PC-3 (cell line): ENCODE measurements at regions of chr17 and their contacts with region 1.

Region 1: GRCh38 chr17:28041068-28041843 is 1.2 kb upstream of the NLK start:
- DNase-seq: peak; percentile 96
- ATAC-seq: peak; percentile 94
- H3K4me3 ChIP-seq: peak overlapping the region; percentile 82; the same call in 1 of the 2 replicates
- H3K27ac ChIP-seq: no peak overlapping the region
- H3K4me1 ChIP-seq: peaks cover 39% of the 10 kb centered on the region
- H3K27me3 ChIP-seq: no peaks in the 10 kb centered on the region
- CTCF ChIP-seq: no peak

Region 2: DNA sequence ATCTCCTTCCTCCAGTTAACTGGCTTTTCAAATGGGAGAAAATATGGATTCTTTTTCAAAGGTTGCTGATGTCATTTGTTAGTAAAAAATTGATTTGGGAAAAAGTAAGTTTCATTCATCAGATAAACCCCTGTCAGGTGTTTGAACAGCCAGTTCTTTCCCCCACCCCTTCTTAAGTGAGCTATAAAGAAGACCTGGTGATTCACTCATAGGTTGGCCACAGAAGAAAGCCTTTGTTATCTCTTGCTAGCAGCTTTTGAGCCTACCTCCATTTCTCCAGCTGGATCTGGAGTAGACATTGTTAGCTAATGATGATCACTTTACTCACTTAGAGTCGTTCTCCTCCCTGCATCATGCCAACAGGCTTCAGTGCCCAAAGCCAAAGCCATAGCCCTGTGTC is 64.2 kb after region 1 on chr17:
- CTCF ChIA-PET with region 1: no interaction called
- POLR2A ChIA-PET with region 1: no interaction called
- intact Hi-C with region 1: loop called (anchors 5 kb)
- DNase-seq: no peak
- ATAC-seq: no peak
- H3K4me3 ChIP-seq: no peak overlapping the region
- H3K27ac ChIP-seq: no peak overlapping the region
- H3K4me1 ChIP-seq: no peaks in the 10 kb centered on the region
- H3K27me3 ChIP-seq: no peaks in the 10 kb centered on the region
- CTCF ChIP-seq: no peak

Region 3: GRCh38 chr17:28174352-28174964 is 133.2 kb after region 1 on chr17:
- CTCF ChIA-PET with region 1: no interaction called
- POLR2A ChIA-PET with region 1: no interaction called
- intact Hi-C with region 1: loop called (anchors 10 kb)
- DNase-seq: peak; percentile 13
- ATAC-seq: no peak
- H3K4me3 ChIP-seq: no peak overlapping the region
- H3K27ac ChIP-seq: no peak overlapping the region
- H3K4me1 ChIP-seq: no peaks in the 10 kb centered on the region
- H3K27me3 ChIP-seq: no peaks in the 10 kb centered on the region
- CTCF ChIP-seq: no peak